Esophagus squamous epithelium (tissue), 5 donors: ENCODE measurements at regions of chr5 and their contacts with region 1.

Region 1: DNA sequence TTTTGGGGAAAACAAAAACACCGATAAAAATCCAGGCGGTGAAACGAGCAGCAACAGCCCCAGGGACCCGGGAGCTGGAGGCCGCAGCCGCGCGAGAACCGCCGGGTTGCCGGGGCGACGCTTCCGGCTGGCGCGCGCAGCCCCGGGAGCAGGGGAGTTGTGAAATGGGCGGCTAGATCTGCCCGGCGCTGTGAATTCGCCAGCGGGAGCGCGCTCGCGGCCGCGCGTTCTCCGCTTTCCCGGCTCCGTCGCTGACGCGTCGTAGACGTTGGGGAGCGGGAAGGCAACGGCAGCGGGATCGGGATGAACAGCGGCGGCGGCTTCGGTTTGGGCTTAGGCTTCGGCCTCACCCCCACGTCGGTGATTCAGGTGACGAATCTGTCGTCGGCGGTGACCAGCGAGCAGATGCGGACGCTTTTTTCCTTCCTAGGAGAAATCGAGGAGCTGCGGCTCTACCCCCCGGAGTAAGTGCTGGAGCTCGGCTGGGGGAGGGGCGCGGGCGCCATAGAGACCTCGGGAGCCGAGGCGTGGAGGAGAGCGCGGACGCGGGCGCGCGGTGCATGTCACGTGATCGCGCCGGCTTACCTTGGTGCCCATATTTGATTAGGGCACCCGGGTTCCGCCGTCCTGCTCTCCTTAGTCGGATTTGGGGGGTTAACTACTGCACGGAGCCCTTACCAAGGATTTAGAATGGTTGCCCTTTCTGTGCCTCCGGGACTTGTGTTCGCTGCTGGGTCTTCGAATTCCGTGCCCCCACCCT is at the start of gene SREK1:
- DNase-seq: peak; percentile 71
- H3K4me3 ChIP-seq: peak within 1 kb of the TSS; percentile 83 to 95 (median 92)
- H3K27ac ChIP-seq: peak within 1 kb of the TSS; percentile 97 to 99 (median 99)
- H3K4me1 ChIP-seq: peaks cover 19 to 43% (median 19%) of the 10 kb centered on the region in 3 donors
- H3K27me3 ChIP-seq: no peaks in the 10 kb centered on the region
- CTCF ChIP-seq: no peak
- POLR2A ChIP-seq: peak in 3 of 4 donors; percentile 42 to 93 (median 89)
- total RNA-seq, gene SREK1: 18.7 to 95.0 (median 54.4) TPM

Region 2: DNA sequence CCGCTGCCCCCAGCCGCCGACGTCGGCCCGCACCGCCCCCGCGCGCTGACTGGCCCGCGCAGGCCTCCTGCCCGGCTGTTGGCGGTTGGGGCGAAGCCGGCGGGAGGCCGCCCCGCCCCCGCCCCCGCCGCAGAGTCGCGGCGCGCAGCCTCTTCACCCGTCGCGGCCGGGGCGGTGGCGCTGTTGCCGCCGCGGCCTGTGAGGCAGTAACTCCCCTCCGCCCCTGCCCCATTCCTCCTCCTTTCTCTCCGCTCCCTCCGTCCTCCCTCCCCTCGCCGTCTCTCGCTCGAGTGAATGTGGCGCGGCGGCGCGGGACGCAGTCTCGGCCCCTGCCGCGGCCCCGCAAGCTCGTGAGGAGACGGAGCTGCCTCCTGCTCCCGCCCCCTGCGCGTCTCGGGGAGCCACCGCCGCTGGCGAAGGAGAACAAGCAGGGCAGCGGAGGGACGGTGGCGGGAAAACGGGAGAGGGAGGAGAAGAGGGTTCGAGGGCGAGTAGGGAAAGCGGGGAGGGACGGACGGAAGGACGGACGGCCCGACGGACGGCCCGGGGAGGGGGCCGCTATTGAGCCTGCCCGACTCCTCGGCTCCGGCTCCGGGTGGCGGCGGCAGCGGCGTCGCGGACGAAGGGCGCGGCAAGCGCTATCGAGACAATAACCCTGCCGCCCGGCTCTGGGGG is 218.5 kb before region 1 on chr5:
- intact Hi-C with region 1: loop called (anchors 10 kb)
- DNase-seq: no peak
- H3K4me3 ChIP-seq: peak overlapping the region; percentile 68 to 95 (median 87)
- H3K27ac ChIP-seq: peak overlapping the region; percentile 98 to 100 (median 99)
- H3K4me1 ChIP-seq: peaks cover 0 to 36% (median 15%) of the 10 kb centered on the region in 3 donors
- H3K27me3 ChIP-seq: no peaks in the 10 kb centered on the region
- CTCF ChIP-seq: peak in 5 of 6 experiments; percentile 7 to 50 (median 36)
- POLR2A ChIP-seq: peak in 2 of 4 donors; percentile 89 to 91

Region 3: GRCh38 chr5:66197771-66198405 is 53.6 kb after region 1 on chr5:
- intact Hi-C with region 1: no loop called
- DNase-seq: no peak
- H3K4me3 ChIP-seq: no peak overlapping the region
- H3K27ac ChIP-seq: no peak overlapping the region
- H3K4me1 ChIP-seq: no peaks in the 10 kb centered on the region
- H3K27me3 ChIP-seq: no peaks in the 10 kb centered on the region
- CTCF ChIP-seq: no peak
- POLR2A ChIP-seq: no peak

Region 4: GRCh38 chr5:66814146-66814991 is 670.1 kb after region 1 on chr5:
- intact Hi-C with region 1: no loop called
- DNase-seq: no peak
- H3K4me3 ChIP-seq: no peak overlapping the region
- H3K27ac ChIP-seq: no peak overlapping the region
- H3K4me1 ChIP-seq: no peaks in the 10 kb centered on the region
- H3K27me3 ChIP-seq: no peaks in the 10 kb centered on the region
- CTCF ChIP-seq: peak; percentile 53 to 78 (median 71)
- POLR2A ChIP-seq: no peak

Region 5: GRCh38 chr5:66829826-66830225 is 685.6 kb after region 1 on chr5:
- intact Hi-C with region 1: no loop called
- DNase-seq: no peak
- H3K4me3 ChIP-seq: peak overlapping the region in 1 of 4 donors; percentile 65
- H3K27ac ChIP-seq: peak overlapping the region in 1 of 4 donors; percentile 77
- H3K4me1 ChIP-seq: peaks cover 4 to 30% (median 4%) of the 10 kb centered on the region in 3 donors
- H3K27me3 ChIP-seq: no peaks in the 10 kb centered on the region
- CTCF ChIP-seq: no peak
- POLR2A ChIP-seq: no peak